ENCODE measurements at regions of chr9 and their contacts with region 1.

Region 1: GRCh38 chr9:129610473-129611301 is 10.2 kb downstream of the C9orf50 start:
- DNase-seq: peak in 1 of 2 donors; percentile 90
- H3K4me3 ChIP-seq: peak overlapping the region; percentile 63 to 84
- H3K27ac ChIP-seq: peak overlapping the region; percentile 91 to 92
- H3K4me1 ChIP-seq: peaks cover 5 to 46% of the 10 kb centered on the region in 2 donors
- H3K27me3 ChIP-seq: no peaks in the 10 kb centered on the region
- CTCF ChIP-seq: peak; percentile 74 to 100 (median 81)

Region 2: DNA sequence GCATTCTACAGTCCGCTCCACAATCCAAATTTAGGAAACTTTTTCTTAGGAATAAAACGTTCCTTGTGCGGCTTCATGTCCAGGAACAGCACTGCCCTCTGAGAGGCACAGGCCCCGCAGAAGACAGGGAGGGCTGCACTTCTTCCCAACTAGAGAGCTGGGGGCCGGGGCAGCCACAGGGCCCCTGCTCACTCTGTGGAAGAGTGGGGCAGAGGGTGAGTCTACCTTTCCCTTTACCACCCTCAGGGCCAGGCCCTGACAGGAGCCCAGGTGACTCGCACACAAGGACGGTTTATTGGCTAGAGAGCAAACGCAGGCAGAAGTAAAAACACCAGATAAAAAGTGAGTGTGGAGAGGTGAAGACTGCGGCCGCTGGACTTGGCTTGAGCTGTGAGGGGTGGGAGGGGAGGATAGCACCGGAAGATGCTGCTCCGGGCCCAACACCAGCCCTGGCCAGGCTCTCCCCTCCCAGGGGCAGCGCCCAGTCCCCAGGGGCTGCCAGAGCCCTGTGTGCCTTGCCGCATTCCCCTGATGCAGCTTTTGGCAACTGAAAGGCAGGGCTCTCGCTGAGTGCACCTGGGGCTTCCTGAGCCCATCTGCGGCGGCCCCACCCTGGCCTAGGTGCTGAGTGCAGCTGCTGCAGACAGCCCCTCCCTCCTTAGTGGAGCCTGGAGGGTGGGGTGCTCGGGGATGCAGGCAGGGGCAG is 602.8 kb before region 1 on chr9:
- intact Hi-C with region 1: no loop called
- DNase-seq: no peak
- H3K4me3 ChIP-seq: no peak overlapping the region
- H3K27ac ChIP-seq: peak overlapping the region; percentile 61 to 70
- H3K4me1 ChIP-seq: peaks cover 0 to 18% of the 10 kb centered on the region in 2 donors
- H3K27me3 ChIP-seq: no peaks in the 10 kb centered on the region
- CTCF ChIP-seq: no peak

Region 3: DNA sequence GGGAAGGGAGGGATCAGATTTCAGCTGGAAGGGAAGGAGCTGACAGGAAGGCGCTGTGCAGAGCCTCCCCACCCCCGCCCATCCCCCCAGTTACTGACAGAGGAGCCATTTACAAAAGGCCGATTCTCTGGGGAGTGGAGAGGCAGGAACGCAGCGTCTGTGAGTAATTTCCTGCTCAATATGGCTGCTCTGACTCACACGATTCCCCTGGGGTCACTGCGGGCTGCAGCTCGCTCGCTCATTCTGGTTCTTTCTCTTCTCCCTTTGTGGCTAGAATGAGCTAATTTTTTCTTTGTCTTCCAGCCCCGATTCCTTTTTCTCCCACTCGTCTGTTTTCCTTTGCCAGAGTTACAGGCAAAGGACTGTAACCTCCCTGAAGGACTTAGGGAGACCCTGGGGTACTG is 470.7 kb before region 1 on chr9:
- intact Hi-C with region 1: loop called (anchors 1 kb)
- DNase-seq: peak; percentile 91 to 98
- H3K4me3 ChIP-seq: peak overlapping the region; percentile 52 to 56
- H3K27ac ChIP-seq: peak overlapping the region; percentile 98
- H3K4me1 ChIP-seq: peaks cover 49 to 71% of the 10 kb centered on the region in 2 donors
- H3K27me3 ChIP-seq: no peaks in the 10 kb centered on the region
- CTCF ChIP-seq: no peak

Region 4: GRCh38 chr9:129320575-129321263 is 290.0 kb before region 1 on chr9:
- intact Hi-C with region 1: loop called (anchors 5 kb)
- DNase-seq: peak in 1 of 2 donors; percentile 88
- H3K4me3 ChIP-seq: peak overlapping the region; percentile 54 to 60
- H3K27ac ChIP-seq: peak overlapping the region; percentile 92 to 94
- H3K4me1 ChIP-seq: peaks cover 30 to 66% of the 10 kb centered on the region in 2 donors
- H3K27me3 ChIP-seq: no peaks in the 10 kb centered on the region
- CTCF ChIP-seq: peak in 2 of 3 experiments; percentile 2 to 17

Region 5: GRCh38 chr9:129383561-129384416 is 226.9 kb before region 1 on chr9:
- intact Hi-C with region 1: loop called (anchors 2 kb)
- DNase-seq: peak; percentile 41 to 86
- H3K4me3 ChIP-seq: peak overlapping the region; percentile 70 to 76
- H3K27ac ChIP-seq: peak overlapping the region; percentile 93 to 95
- H3K4me1 ChIP-seq: peaks cover 4 to 17% of the 10 kb centered on the region in 2 donors
- H3K27me3 ChIP-seq: no peaks in the 10 kb centered on the region
- CTCF ChIP-seq: peak in 2 of 3 experiments; percentile 16 to 33

Region 6: GRCh38 chr9:129495534-129496325 is 115.0 kb before region 1 on chr9:
- intact Hi-C with region 1: loop called (anchors 1 kb)
- DNase-seq: peak; percentile 68 to 96
- H3K4me3 ChIP-seq: peak overlapping the region; percentile 68 to 72
- H3K27ac ChIP-seq: peak overlapping the region; percentile 98 to 100
- H3K4me1 ChIP-seq: peaks cover 15 to 62% of the 10 kb centered on the region in 2 donors
- H3K27me3 ChIP-seq: no peaks in the 10 kb centered on the region
- CTCF ChIP-seq: no peak

Region 7: DNA sequence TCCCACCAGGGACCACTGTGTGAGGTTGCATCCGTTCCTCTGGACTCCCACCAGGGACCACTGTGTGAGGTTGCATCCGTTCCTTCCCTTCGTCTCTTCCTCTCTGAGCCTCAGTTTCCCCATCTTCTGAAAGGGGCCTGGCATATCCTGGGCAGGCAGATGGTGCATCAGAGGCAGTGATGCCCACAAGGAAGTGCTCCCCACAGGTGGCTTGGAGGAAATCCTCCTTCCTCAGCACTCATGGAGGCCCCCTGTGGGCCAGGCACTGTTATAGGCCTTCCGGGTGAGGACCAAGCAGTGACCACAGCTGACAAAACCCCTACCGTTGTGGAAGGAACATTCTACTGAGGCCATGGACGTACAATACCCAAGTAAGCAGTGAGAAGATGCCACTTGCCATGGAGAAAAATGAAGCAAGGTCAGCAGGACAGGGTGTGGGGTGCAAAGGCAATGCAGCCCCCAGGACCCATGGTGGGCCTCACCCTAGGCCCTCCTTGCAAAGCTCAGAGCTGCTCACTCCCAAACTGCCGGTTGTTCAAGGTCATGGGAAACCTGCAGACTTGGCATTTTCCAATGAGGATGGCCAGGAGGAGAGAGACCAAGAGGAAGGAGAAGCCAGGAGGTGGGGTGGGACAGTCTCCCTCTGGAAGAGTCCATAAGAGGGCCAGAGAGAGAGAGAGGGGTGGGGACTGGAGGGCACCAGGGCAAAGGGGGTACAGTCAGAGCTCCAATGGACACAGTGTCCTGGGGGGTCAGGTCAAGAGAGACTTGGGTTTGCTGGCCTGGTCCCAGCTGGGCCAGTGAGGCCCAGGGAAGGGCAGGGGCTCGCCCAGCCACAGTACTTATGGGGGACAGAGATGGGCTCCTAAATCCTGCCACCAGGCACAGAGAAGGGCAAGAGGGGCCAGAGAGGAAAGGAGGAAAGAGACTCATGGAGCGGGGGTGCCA is 40.9 kb before region 1 on chr9:
- intact Hi-C with region 1: loop called (anchors 2 kb)
- DNase-seq: no peak
- H3K4me3 ChIP-seq: peak overlapping the region in 1 of 2 donors; percentile 66
- H3K27ac ChIP-seq: peak overlapping the region; percentile 78 to 80
- H3K4me1 ChIP-seq: peaks cover 8 to 18% of the 10 kb centered on the region in 2 donors
- H3K27me3 ChIP-seq: no peaks in the 10 kb centered on the region
- CTCF ChIP-seq: peak; percentile 16 to 30 (median 29)

Measured in ascending aorta (tissue), 2 donors.